Posterior vena cava (tissue), 2 donors: ENCODE measurements at regions of chr4 and their contacts with region 1.

Region 1: GRCh38 chr4:48623182-48623780 is 133.2 kb downstream of the ZAR1 start:
- DNase-seq: no peak

Region 2: DNA sequence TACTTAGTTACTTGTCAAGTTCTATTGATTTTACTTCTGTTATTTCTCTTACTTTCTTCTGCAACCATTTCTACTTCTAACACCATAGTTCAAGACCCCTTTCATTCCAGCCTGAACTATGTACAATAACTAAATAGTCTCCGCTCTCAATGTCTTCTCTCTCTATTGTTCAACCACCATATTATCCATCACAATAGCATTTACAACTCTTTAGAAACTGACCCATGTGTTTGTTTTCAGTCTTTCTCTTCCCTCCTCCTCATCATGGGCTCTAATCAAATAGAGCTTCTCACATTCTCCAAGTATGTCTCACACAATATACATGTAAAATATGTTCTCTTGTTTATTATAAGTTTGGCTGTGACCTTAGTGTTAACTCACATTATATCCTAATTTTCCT is 10.4 kb after region 1 on chr4:
- intact Hi-C with region 1: loop called in 1 of 2 experiments (anchors 1 kb)
- DNase-seq: no peak